ENCODE measurements at regions of chr5 and their contacts with region 1.

Region 1: DNA sequence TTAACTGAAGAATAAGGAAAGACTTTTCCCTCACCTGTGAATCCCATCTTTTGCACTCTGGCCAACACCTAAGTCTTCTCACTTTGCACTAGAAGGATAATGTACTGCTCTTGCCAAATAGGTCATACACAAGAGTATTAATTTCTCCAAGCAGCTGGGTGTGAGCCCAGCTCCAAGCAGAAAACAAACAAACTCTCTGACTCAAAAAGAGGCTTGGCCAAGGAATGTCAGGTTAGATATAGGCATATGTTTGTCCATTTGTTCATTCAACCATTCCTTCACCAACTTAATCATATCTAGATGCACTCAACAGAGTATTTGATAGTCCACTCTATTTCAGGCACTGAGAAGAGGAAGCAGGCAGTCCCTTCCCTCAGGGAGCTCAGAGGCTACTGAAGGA is 84.4 kb downstream of the HTR4 start:
- DNase-seq: no peak
- H3K4me3 ChIP-seq: no peak overlapping the region
- CTCF ChIP-seq: no peak

Region 2: DNA sequence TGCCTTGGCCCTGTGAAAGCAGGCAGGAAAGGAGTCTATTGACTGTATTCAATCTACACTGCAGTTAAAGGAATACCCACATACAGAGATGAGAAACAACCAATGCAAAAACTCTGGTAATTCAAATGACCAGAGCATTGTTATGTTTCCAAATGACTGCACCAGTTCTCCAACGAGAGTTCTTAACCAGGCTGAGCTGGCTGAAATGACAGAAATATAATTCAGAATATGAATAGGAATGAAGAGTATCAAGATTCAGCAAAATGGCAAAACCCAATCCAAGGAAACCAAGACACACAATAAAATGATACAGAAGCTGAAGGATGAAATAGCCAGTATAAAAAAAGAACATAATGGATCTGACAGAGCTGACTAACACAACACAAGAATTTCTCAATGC is 34.8 kb before region 1 on chr5:
- in situ Hi-C with region 1: loop called (anchors 5 kb)
- DNase-seq: no peak
- H3K4me3 ChIP-seq: no peak overlapping the region
- CTCF ChIP-seq: no peak